Sigmoid colon (tissue), 7 donors: ENCODE measurements at regions of chr15 and their contacts with region 1.

Region 1: GRCh38 chr15:74460871-74461846 is at the start of gene UBL7:
- DNase-seq: peak; percentile 98
- H3K4me3 ChIP-seq: peak within 1 kb of the TSS; percentile 51 to 74 (median 61)
- H3K27ac ChIP-seq: peak within 1 kb of the TSS; percentile 77 to 83 (median 81)
- H3K4me1 ChIP-seq: peaks cover 0 to 21% (median 17%) of the 10 kb centered on the region in 4 donors
- H3K27me3 ChIP-seq: no peaks in the 10 kb centered on the region
- CTCF ChIP-seq: no peak
- EP300 ChIP-seq: no peak
- POLR2A ChIP-seq: peak; percentile 73 to 78
- total RNA-seq, gene UBL7: 48.5 to 85.5 (median 57.7) TPM

Region 2: DNA sequence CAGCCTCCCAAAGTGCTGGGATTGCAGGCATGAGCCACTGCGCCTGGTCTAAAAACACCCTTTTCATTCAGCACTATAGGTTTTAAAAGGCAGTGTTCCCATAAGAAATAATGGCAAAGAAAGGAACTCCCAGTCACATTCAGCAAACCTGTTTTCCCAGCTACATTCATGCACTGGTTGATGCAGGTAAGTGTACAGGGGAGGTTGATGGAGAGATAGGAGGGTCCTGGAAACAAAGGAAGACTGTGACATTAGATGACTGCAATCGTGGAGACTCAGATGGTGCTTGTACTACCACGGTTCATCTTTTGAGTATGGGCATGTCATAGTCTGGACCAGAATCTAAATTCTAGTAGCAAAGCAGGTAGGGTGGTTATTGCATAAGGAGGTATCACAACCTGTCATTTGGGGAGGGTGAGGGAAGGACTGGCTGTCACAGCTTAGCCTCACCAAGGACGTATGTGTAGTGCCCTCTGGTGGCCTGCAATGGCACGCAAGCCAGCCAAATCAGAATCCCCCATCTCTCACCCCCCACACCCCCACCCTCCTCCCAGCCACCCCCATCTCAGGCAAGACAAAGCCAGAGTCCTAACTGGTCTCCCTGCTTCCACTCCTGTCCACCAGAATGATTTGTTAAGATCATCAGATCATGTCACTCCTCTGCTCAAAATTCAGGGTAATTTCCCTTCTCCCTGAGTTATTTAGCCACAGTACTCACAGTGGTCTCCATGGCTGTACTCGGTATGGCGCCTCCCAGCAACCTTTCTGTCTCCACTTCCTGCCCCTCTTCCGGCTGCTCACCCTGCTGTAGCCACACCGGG is 28.6 kb after region 1 on chr15:
- intact Hi-C with region 1: loop called (anchors 1 kb)
- DNase-seq: no peak
- H3K4me3 ChIP-seq: no peak overlapping the region
- H3K27ac ChIP-seq: no peak overlapping the region
- H3K4me1 ChIP-seq: no peaks in the 10 kb centered on the region
- H3K27me3 ChIP-seq: no peaks in the 10 kb centered on the region
- CTCF ChIP-seq: peak in 2 of 4 experiments; percentile 14 to 62
- EP300 ChIP-seq: no peak
- POLR2A ChIP-seq: no peak

Region 3: DNA sequence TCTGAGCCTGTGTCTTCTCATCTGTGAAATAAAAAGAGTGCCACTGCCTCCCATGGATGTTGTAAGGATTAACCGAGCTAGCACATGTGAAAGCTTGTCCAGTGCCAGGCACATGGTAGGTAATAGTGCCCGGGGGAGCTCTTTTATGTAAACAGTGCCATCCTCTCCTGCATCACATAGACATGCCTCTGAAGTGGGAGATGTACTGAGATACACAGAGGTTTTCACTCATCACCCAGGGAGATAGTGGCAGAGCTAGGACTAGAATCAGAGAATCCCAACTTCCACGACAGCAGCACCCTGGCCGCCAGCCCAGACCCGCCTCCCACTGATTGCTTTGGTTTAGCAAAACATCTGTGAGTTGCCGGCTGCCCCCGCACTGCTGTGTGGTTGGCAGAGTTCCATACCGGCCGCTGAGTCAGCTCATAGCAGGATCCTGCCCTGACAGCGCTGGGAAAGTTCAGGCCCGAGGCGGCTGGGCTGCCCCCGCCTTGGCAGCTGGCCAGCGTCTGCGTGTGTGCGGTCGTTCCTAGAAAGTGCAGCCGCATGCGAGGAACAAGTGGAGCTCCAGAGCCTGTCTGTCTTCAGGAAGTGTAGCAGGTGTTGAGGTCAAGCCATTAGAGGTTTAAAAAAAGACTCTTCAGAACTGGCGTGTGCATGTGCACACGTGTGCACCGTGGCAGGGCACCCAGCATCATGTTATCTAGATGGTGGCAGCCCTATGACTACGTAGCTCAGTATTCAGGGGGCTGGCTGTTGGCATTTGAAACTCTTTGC is 84.9 kb after region 1 on chr15:
- intact Hi-C with region 1: loop called (anchors 1 kb)
- DNase-seq: peak; percentile 98
- H3K4me3 ChIP-seq: peak overlapping the region in 1 of 4 donors; percentile 13
- H3K27ac ChIP-seq: peak overlapping the region; percentile 21 to 61 (median 57)
- H3K4me1 ChIP-seq: peaks cover 0 to 37% (median 30%) of the 10 kb centered on the region in 4 donors
- H3K27me3 ChIP-seq: no peaks in the 10 kb centered on the region
- CTCF ChIP-seq: no peak
- EP300 ChIP-seq: peak in 2 of 4 donors; percentile 50 to 63
- POLR2A ChIP-seq: no peak

Region 4: DNA sequence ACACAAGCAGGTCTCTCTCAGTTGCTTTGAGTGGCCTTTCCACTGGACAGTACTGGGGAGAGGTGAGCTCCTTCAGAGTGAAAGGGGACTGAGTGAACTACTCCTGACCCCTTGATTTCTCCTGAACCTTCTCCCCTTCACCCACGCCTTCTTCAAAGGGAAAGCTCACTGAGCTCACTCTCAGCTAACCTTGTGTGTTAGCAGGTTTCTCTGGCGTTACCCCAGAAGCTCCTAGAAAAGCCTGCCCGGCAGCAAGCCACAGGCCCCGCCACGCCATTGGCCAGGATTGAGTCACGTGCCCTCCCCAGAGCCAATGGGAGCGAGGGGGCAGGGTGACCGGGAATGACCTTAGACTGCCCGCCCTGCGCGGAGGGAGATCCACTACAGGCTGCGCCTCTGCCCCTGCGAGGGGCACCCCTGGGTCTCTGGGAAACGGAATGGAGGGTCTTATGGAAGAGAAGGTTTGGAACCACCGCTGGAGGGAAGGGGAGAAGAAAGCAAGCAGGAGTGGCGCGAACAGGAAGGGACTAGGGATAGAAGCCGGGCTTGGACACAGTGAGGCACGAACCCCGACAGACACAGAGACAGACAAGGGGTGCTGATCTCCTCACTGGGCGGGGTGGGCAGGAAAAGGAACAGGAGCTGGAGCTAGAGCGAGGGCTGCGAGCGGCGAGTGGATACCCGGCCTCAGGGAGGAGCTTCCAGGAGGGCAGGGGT is 137.1 kb after region 1 on chr15:
- intact Hi-C with region 1: loop called (anchors 1 kb)
- DNase-seq: peak; percentile 98
- H3K4me3 ChIP-seq: peak overlapping the region; percentile 47 to 68 (median 60)
- H3K27ac ChIP-seq: peak overlapping the region; percentile 85 to 93 (median 88)
- H3K4me1 ChIP-seq: peaks cover 0 to 24% (median 22%) of the 10 kb centered on the region in 4 donors
- H3K27me3 ChIP-seq: no peaks in the 10 kb centered on the region
- CTCF ChIP-seq: no peak
- EP300 ChIP-seq: no peak
- POLR2A ChIP-seq: peak; percentile 83 to 89